ENCODE measurements at regions of chr11 and their contacts with region 1.

Region 1: GRCh38 chr11:66408488-66409214 is 12.2 kb upstream of the NPAS4 start:
- DNase-seq: peak; percentile 81 to 98 (median 88)
- ATAC-seq: peak; percentile 98
- H3K4me3 ChIP-seq: peak overlapping the region; percentile 51
- H3K4me3 Mint-ChIP-seq: peak overlapping the region; percentile 42 to 86 (median 84)
- H3K27ac ChIP-seq: no peak overlapping the region
- H3K27ac Mint-ChIP-seq: peak overlapping the region in 3 of 9 donors; percentile 4 to 75 (median 20)
- H3K4me1 ChIP-seq: peaks cover 4 to 5% of the 10 kb centered on the region in 2 donors
- H3K4me1 Mint-ChIP-seq: peaks cover 0 to 5% (median 4%) of the 10 kb centered on the region in 7 donors
- H3K27me3 ChIP-seq: no peaks in the 10 kb centered on the region
- H3K27me3 Mint-ChIP-seq: peaks cover 17 to 35% (median 28%) of the 10 kb centered on the region in 5 donors

Region 2: DNA sequence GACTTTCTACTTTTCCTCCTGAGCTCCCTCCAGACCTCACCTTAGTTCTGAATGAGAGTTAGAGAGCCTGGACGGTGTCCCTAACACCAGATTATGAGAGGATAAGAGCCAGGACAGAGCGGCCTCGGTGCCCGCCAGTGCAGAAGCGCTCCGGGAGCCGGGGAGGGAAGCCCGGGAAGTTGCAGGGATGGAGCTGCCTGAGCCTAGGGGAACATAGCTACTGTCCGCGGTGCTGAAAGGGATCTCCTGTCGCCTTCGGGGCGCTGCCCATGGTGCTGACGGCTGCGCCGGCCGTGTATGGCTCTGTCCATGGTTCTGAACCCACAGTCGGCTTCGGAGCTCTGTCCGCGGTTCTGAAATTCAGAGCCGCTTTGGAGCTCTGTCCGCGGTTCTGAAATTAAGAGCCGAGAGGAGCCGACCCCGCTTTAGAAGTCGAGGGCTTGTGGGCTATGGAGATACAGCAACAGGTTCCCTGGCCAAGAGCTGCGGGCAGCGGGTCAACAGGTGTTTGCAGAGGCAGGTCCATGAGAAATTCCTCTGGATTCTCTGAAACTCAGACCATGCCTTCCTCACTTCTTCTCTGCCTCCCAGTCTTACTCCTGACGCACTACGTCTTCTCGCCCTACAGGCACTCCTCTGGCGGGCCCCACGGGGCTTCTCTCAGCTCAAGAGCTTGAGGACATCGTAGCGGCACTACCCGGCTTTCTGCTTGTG is 13.0 kb after region 1 on chr11:
- CTCF ChIA-PET with region 1: interaction called, 9 read pairs
- POLR2A ChIA-PET with region 1: no interaction called
- intact Hi-C with region 1: loop called in 1 of 2 experiments (anchors 1 kb)
- DNase-seq: peak; percentile 79 to 94 (median 86)
- ATAC-seq: peak; percentile 100
- H3K4me3 ChIP-seq: no peak overlapping the region
- H3K4me3 Mint-ChIP-seq: peak overlapping the region in 4 of 10 donors; percentile 20 to 73 (median 41)
- H3K27ac ChIP-seq: no peak overlapping the region
- H3K27ac Mint-ChIP-seq: peak overlapping the region in 6 of 9 donors; percentile 31 to 85 (median 58)
- H3K4me1 ChIP-seq: no peaks in the 10 kb centered on the region
- H3K4me1 Mint-ChIP-seq: peaks cover 9 to 22% (median 10%) of the 10 kb centered on the region in 7 donors
- H3K27me3 ChIP-seq: peaks cover 7 to 22% of the 10 kb centered on the region in 2 donors
- H3K27me3 Mint-ChIP-seq: peaks cover 23 to 29% (median 29%) of the 10 kb centered on the region in 5 donors

Region 3: DNA sequence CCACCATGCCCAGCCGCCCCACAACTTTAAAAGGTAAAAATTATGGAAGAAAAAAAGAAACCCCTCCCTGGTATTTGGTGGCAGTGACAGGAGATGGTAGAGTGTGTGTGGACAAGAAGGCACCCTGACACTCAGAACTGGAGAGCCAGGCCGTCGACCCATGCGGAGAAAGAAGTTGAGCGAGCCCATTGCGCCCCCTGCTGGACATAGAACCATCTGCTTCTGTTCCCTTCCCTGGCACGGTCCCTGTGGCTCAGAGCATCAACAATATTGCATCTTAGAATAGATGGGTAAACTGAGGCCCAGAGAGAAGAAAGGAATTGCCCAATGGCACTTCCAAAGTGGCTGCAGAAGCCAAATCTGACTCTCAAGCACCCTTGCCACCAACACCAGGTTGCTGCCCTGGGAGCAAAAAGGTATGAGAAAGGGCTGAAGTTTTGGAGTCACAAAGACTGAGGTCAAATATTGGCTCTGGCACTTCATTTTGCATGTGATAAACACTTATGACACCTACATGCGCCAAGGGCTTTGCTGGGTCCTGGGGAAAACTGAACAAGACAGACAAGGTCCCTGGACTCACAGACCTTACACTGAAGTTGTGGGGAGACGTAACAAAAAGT is 21.4 kb after region 1 on chr11:
- CTCF ChIA-PET with region 1: interaction called, 3 read pairs
- POLR2A ChIA-PET with region 1: no interaction called
- intact Hi-C with region 1: loop called (anchors 1 kb)
- DNase-seq: peak; percentile 41 to 75 (median 53)
- ATAC-seq: peak; percentile 80
- H3K4me3 ChIP-seq: no peak overlapping the region
- H3K4me3 Mint-ChIP-seq: no peak overlapping the region
- H3K27ac ChIP-seq: no peak overlapping the region
- H3K27ac Mint-ChIP-seq: no peak overlapping the region
- H3K4me1 ChIP-seq: no peaks in the 10 kb centered on the region
- H3K4me1 Mint-ChIP-seq: peaks cover 0 to 6% (median 0%) of the 10 kb centered on the region in 7 donors
- H3K27me3 ChIP-seq: no peaks in the 10 kb centered on the region
- H3K27me3 Mint-ChIP-seq: no peaks in the 10 kb centered on the region

Region 4: GRCh38 chr11:66480117-66480938 is 71.7 kb after region 1 on chr11 and contains the start of gene DPP3:
- CTCF ChIA-PET with region 1: interaction called, 5 read pairs
- POLR2A ChIA-PET with region 1: interaction called, 3 read pairs
- intact Hi-C with region 1: loop called (anchors 1 kb)
- DNase-seq: peak; percentile 87 to 97 (median 95)
- ATAC-seq: peak; percentile 99
- H3K4me3 ChIP-seq: peak within 1 kb of the TSS; percentile 86
- H3K4me3 Mint-ChIP-seq: peak within 1 kb of the TSS; percentile 86 to 92 (median 90)
- H3K27ac ChIP-seq: peak within 1 kb of the TSS; percentile 90
- H3K27ac Mint-ChIP-seq: peak within 1 kb of the TSS; percentile 75 to 91 (median 90)
- H3K4me1 ChIP-seq: peaks cover 9 to 14% of the 10 kb centered on the region in 2 donors
- H3K4me1 Mint-ChIP-seq: peaks cover 9 to 37% (median 17%) of the 10 kb centered on the region in 7 donors
- H3K27me3 ChIP-seq: no peaks in the 10 kb centered on the region
- H3K27me3 Mint-ChIP-seq: no peaks in the 10 kb centered on the region
- total RNA-seq, gene DPP3: 15.8 to 75.7 (median 19.4) TPM

Region 5: GRCh38 chr11:66579017-66579606 is 170.5 kb after region 1 on chr11:
- CTCF ChIA-PET with region 1: no interaction called
- POLR2A ChIA-PET with region 1: no interaction called
- intact Hi-C with region 1: loop called in 1 of 2 experiments (anchors 1 kb)
- DNase-seq: peak; percentile 51 to 78 (median 66)
- ATAC-seq: peak; percentile 91
- H3K4me3 ChIP-seq: no peak overlapping the region
- H3K4me3 Mint-ChIP-seq: peak overlapping the region in 2 of 10 donors; percentile 22 to 53
- H3K27ac ChIP-seq: no peak overlapping the region
- H3K27ac Mint-ChIP-seq: peak overlapping the region in 2 of 9 donors; percentile 65 to 71
- H3K4me1 ChIP-seq: peaks cover 0 to 6% of the 10 kb centered on the region in 2 donors
- H3K4me1 Mint-ChIP-seq: peaks cover 0 to 11% (median 8%) of the 10 kb centered on the region in 7 donors
- H3K27me3 ChIP-seq: no peaks in the 10 kb centered on the region
- H3K27me3 Mint-ChIP-seq: peaks cover 0 to 25% (median 15%) of the 10 kb centered on the region in 5 donors

Region 6: DNA sequence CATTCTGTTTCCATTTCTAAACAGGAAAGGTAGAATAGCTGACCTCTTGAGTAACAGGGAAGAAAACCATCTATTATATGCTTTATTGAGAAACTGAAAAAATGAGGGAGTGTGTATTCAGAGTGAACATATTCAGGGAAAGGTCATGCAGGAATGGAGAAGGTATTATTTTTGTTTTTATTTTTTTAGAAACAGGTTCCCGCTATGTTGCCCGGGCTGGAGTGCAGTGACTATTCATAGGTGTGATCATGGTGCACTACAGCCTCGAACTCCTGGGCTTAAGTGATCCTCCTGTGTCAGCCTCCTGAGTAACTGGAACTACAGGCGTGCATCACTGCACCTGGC is 425.8 kb after region 1 on chr11:
- CTCF ChIA-PET with region 1: interaction called, 3 read pairs
- POLR2A ChIA-PET with region 1: no interaction called
- intact Hi-C with region 1: loop called in 1 of 2 experiments (anchors 1 kb)
- DNase-seq: no peak
- ATAC-seq: no peak
- H3K4me3 ChIP-seq: no peak overlapping the region
- H3K4me3 Mint-ChIP-seq: no peak overlapping the region
- H3K27ac ChIP-seq: peak overlapping the region; percentile 6
- H3K27ac Mint-ChIP-seq: peak overlapping the region in 8 of 9 donors; percentile 22 to 92 (median 62)
- H3K4me1 ChIP-seq: peaks cover 3 to 6% of the 10 kb centered on the region in 2 donors
- H3K4me1 Mint-ChIP-seq: peaks cover 0 to 23% (median 18%) of the 10 kb centered on the region in 7 donors
- H3K27me3 ChIP-seq: no peaks in the 10 kb centered on the region
- H3K27me3 Mint-ChIP-seq: no peaks in the 10 kb centered on the region

Measured in naive thymus-derived CD4-positive, alpha-beta T cell (primary cell).